ENCODE measurements at regions of chr12 and their contacts with region 1.

Region 1: DNA sequence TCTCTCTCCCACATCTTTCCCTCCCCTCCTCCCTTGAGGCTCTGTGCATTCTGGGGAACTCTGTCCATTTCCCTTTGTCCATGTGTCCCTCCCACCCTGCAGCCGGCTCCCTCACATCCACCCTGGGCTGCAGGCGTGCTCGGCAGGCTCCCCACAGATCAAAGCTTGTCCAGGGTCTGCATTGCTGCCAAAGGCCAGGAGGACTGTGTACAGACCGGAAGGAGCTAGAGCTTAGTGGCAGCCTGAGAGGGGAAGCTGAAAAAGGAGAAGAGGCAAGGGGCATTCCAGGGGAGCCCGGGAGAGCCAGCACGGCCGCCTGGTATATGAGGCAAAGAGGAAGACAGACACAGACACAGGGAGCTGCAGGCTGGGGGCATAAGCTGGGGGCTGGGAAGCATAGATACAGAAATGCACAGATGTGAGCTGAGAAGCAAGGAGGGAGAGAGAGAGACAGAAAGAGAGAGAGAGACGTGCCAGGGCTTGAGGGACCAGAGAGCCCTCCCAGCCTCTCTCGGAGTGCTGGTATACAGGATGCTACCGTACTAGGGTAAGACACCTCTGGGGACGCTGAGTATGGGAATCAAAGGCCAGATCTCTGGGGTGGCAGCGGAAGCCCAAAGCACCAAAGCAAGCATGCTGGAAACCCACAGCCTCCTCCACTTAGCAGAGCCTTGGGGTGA is 3.3 kb downstream of the CD4 start:
- DNase-seq: peak; percentile 70
- H3K4me3 Mint-ChIP-seq: peak overlapping the region; percentile 93
- H3K27ac Mint-ChIP-seq: peak overlapping the region; percentile 90
- H3K4me1 Mint-ChIP-seq: peaks cover 51% of the 10 kb centered on the region
- H3K27me3 Mint-ChIP-seq: no peaks in the 10 kb centered on the region

Region 2: GRCh38 chr12:6764011-6764828 is 28.4 kb before region 1 on chr12:
- CTCF ChIA-PET with region 1: interaction called, 50 read pairs
- POLR2A ChIA-PET with region 1: interaction called, 153 read pairs
- DNase-seq: peak; percentile 71
- H3K4me3 Mint-ChIP-seq: peak overlapping the region; percentile 38
- H3K27ac Mint-ChIP-seq: no peak overlapping the region
- H3K4me1 Mint-ChIP-seq: peaks cover 42% of the 10 kb centered on the region
- H3K27me3 Mint-ChIP-seq: peaks cover 46% of the 10 kb centered on the region

Region 3: GRCh38 chr12:6778574-6779550 is 13.8 kb before region 1 on chr12:
- CTCF ChIA-PET with region 1: interaction called, 13 read pairs
- POLR2A ChIA-PET with region 1: interaction called, 153 read pairs
- DNase-seq: peak; percentile 91
- H3K4me3 Mint-ChIP-seq: peak overlapping the region; percentile 71
- H3K27ac Mint-ChIP-seq: peak overlapping the region; percentile 74
- H3K4me1 Mint-ChIP-seq: peaks cover 68% of the 10 kb centered on the region
- H3K27me3 Mint-ChIP-seq: peaks cover 6% of the 10 kb centered on the region

Region 4: DNA sequence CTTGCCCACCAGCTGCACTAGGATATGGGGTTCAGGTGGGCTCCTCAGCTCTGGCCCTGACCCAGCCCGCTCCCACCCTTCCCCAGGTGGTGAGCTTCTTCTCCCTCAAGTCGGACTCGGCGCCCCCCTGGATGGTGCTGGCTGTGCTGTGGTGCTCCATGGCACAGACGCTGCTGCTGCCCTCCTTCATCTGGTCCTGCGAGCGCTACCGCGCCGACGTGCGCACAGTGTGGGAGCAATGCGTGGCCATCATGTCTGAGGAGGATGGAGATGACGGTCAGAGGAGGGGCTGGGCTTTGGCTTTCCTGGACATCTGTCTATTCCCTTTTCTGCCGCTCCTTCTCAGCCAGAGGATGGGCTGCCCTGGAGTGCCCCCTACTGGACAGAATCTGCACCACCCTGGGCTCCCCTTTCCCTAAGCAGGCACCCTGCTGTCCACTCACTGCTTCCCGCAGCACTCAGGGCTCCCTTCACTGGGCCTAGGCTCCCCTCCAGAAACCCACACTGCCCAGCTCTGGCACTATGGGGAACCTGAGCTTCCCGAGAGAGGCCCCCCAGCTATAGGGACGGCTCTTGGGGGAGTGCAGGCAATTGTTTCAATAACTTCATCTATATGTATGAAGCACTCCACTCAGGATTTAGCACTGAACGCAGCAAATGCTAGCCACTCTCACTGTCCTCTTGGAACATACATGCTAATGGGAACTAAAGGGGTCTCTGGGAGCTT is 32.9 kb after region 1 on chr12:
- CTCF ChIA-PET with region 1: interaction called, 15 read pairs
- POLR2A ChIA-PET with region 1: interaction called, 9 read pairs
- DNase-seq: peak; percentile 84
- H3K4me3 Mint-ChIP-seq: no peak overlapping the region
- H3K27ac Mint-ChIP-seq: no peak overlapping the region
- H3K4me1 Mint-ChIP-seq: peaks cover 27% of the 10 kb centered on the region
- H3K27me3 Mint-ChIP-seq: peaks cover 72% of the 10 kb centered on the region

Region 5: DNA sequence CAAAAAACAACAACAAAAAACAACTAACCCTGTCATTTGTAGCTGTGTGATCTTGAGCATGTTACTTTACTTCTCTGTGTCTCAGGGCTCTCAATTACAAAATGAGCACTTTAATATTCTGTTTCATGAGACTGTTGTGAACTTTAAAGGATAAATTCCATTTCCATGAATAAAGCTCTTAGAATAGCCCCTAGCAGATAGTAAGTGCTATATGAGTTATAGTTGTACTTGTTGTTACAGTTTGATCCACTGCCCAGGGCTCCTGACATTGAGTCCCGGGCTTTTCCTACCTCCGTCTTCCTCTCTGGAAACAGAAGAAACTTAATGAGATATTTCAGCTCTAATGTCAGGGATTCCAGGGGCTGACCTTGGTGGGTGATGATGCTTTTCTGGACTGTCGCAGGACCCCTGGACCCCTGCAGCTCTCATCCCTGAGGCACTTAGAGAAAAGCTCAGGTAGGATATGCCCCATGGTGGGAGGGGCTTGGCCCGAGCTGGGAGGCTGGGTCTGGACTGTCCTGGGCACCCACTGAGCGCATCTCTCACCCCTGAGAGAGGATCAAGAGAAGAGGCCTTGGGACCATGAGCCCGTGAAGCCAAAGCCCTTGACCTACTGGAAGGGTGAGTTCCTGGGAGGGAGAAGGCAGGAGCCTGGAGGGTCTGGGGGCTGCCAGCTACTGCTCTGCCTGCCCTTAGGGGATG is 40.7 kb after region 1 on chr12:
- CTCF ChIA-PET with region 1: interaction called, 9 read pairs
- POLR2A ChIA-PET with region 1: interaction called, 10 read pairs
- DNase-seq: no peak
- H3K4me3 Mint-ChIP-seq: no peak overlapping the region
- H3K27ac Mint-ChIP-seq: no peak overlapping the region
- H3K4me1 Mint-ChIP-seq: peaks cover 17% of the 10 kb centered on the region
- H3K27me3 Mint-ChIP-seq: peaks cover 38% of the 10 kb centered on the region

Measured in activated CD4-positive, alpha-beta memory T cell treated with anti-CD3 and anti-CD28 coated beads, Interleukin-2, amount 10 ng/mL, durations not matched to agents 7 days and 5 days (primary cell).